Sciatic nerve (tissue), 2 donors: ENCODE measurements at regions of chr12 and their contacts with region 1.

Region 1: DNA sequence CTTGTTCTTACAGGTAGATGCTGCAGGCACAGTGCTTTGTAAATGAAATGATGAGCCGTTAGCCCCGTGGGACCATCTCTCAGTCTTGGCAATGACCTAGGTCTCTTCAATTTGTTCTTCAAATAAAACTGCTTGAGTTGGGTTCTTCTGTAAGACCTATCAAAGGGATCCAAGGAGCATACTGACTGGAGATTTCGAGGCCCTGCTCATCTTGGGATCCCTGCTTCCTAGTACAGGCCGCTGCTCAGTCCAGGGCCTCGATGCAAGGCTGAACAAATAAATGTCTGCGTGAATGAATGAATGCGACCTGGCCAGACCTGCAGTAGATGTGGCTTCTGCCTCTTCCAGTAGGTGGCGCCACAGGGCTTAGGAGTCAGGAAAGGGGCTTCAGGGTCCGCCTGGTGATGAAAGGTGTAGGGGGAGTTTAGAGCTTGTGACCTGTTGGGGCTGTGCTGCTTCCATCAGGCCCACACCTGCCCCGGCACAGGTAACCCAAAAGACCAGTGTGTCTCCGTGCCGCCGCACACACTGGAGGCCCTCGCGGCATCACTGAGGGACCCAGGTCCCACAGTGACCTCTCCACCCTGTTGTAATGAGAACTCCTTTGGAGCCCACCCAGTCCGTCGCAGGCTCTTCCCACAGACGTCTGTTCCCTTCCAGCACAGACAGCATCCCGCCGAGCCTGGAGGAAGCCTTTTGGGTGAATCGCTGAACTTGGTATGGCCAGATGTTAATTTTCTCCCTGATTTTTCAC is 4.4 kb downstream of the CACNA1C start:
- DNase-seq: peak; percentile 74
- ATAC-seq: no peak

Region 2: DNA sequence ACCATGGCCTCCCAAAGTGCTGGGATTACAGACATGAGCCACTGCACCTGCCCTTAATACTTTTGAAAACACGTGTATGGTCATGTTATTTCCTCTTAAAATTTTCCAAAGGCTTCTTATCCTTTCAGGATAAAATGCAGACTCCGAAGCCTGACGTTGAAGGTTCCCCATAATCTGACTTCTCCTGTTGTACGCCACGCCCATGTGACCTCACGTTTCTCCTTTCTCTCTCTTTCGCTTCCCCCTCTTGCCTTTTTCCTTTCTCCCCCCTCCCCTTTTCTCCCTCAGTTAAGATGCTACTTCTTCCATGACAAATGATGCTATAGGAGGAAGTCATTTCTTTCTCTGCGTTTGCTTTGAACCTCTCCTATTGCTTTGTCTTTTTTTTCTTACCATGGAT is 728.8 kb before region 1 on chr12:
- intact Hi-C with region 1: no loop called
- DNase-seq: no peak
- ATAC-seq: peak; percentile 39

Region 3: GRCh38 chr12:1970331-1970900 is 86.8 kb before region 1 on chr12:
- intact Hi-C with region 1: no loop called
- DNase-seq: no peak
- ATAC-seq: no peak

Region 4: DNA sequence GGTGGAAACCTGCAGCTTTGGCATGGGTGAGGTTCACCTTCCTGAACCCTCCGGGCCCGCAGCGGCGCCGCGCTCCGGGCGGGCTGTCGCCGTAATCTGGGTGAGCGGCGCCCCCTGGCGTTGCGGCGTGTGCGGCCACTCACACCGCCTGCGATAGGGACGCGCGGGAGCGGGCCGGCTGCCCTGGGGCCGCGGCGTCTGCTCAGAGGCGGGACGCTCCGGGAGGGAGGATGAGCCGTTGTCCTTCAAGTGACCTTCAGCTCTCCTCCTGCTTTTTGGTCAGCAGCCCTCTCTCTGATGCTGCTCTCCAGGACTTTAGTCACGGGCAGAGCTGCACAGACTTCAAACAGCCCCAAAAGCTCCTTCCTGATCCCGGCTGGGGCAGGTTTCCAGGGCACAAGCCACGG is 525.9 kb after region 1 on chr12:
- intact Hi-C with region 1: loop called (anchors 10 kb)
- DNase-seq: peak; percentile 84
- ATAC-seq: peak; percentile 90